ENCODE measurements at regions of chr1 and their contacts with region 1.

Region 1: DNA sequence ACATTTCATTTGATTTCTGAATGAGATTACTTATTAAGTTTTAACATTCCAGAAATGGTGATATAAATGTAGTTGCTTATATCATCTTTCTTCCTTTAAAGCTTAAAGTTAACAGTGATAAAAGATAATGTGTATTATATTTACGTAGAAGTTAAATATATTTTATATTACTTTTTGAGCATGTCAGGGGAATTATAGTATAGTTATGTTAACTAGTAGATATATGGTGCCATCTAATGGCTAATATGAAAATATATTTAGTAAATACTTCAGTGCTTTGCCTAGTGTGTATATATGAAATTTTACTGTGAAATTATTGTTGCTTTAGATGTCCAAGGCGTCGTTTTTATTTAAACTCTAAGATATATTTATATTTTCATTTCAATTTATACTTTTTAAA is 51.5 kb downstream of the SYT14 start:
- DNase-seq: no peak
- H3K4me3 ChIP-seq: no peak overlapping the region
- H3K4me3 Mint-ChIP-seq: no peak overlapping the region
- H3K27ac Mint-ChIP-seq: no peak overlapping the region
- H3K4me1 ChIP-seq: 0 out of 2 replicates have a peak, but pooled peaks cover 6% of the 10 kb centered on the region
- H3K4me1 Mint-ChIP-seq: no peaks in the 10 kb centered on the region
- H3K27me3 ChIP-seq: no peaks in the 10 kb centered on the region
- H3K27me3 Mint-ChIP-seq: no peaks in the 10 kb centered on the region
- CTCF ChIP-seq: peak in 1 of 2 experiments; percentile 38

Region 2: GRCh38 chr1:209850342-209850979 is 139.1 kb before region 1 on chr1:
- CTCF ChIA-PET with region 1: no interaction called
- POLR2A ChIA-PET with region 1: no interaction called
- intact Hi-C with region 1: loop called (anchors 1 kb)
- DNase-seq: peak; percentile 66 to 74
- H3K4me3 ChIP-seq: no peak overlapping the region
- H3K4me3 Mint-ChIP-seq: no peak overlapping the region
- H3K27ac Mint-ChIP-seq: no peak overlapping the region
- H3K4me1 ChIP-seq: no peaks in the 10 kb centered on the region
- H3K4me1 Mint-ChIP-seq: no peaks in the 10 kb centered on the region
- H3K27me3 ChIP-seq: no peaks in the 10 kb centered on the region
- H3K27me3 Mint-ChIP-seq: no peaks in the 10 kb centered on the region
- CTCF ChIP-seq: peak; percentile 74 to 79

Region 3: DNA sequence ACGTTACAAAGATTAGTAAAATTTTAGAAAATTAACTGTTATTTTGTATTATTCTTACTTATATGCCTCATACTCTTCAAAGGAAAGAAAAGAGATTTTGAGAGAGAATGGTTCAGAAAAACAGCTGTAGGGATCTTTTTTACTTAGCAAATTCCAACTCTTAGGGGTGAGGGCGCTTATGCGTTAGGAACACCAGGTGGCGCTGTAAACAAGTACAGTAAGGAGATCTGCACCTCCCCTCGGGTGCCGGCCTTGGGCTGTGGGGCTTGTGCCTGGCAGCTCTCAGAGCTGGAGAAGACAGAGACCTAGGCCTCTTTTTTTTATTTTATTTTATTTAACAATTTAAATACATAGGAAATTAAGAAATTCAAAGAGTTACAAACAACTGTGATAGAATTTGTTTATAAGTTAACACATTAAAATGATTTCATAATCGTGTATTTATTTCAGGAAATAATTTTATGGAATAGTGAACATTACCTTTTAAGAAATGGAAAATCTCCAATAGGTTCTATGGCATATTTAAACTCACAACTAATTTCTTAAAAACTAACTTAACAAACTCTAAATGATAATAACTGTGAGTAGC is 129.1 kb before region 1 on chr1:
- CTCF ChIA-PET with region 1: interaction called, 7 read pairs
- POLR2A ChIA-PET with region 1: no interaction called
- intact Hi-C with region 1: loop called (anchors 1 kb)
- DNase-seq: peak; percentile 77 to 80
- H3K4me3 ChIP-seq: no peak overlapping the region
- H3K4me3 Mint-ChIP-seq: no peak overlapping the region
- H3K27ac Mint-ChIP-seq: no peak overlapping the region
- H3K4me1 ChIP-seq: no peaks in the 10 kb centered on the region
- H3K4me1 Mint-ChIP-seq: no peaks in the 10 kb centered on the region
- H3K27me3 ChIP-seq: no peaks in the 10 kb centered on the region
- H3K27me3 Mint-ChIP-seq: no peaks in the 10 kb centered on the region
- CTCF ChIP-seq: peak; percentile 90 to 92

Region 4: DNA sequence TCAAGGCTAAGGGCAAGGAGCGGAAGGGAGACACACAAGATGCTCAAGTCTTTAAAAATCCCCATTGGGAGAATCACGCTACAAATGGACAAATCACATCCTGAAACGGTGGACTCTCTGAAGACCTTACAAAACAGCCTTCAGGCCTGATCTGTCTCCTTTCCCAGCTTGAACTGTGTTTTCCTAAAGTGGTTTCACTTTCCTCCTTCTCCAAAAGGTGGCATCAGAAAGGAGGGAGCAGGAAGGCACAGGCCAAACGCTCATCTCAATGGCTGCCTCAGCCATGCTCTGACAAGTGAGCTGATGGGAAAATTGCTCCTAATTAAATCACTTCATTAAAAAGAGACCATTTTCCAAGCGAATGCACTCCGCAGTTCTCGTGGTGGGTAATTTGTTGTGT is 114.0 kb before region 1 on chr1:
- CTCF ChIA-PET with region 1: no interaction called
- POLR2A ChIA-PET with region 1: no interaction called
- intact Hi-C with region 1: loop called (anchors 1 kb)
- DNase-seq: peak in 1 of 2 experiments; percentile 24
- H3K4me3 ChIP-seq: no peak overlapping the region
- H3K4me3 Mint-ChIP-seq: no peak overlapping the region
- H3K27ac Mint-ChIP-seq: no peak overlapping the region
- H3K4me1 ChIP-seq: no peaks in the 10 kb centered on the region; the same call in 1 of the 2 replicates
- H3K4me1 Mint-ChIP-seq: peaks cover 8% of the 10 kb centered on the region
- H3K27me3 ChIP-seq: no peaks in the 10 kb centered on the region
- H3K27me3 Mint-ChIP-seq: peaks cover 4% of the 10 kb centered on the region
- CTCF ChIP-seq: peak in 1 of 2 experiments; percentile 24

Region 5: GRCh38 chr1:210049616-210050015 is 60.1 kb after region 1 on chr1:
- CTCF ChIA-PET with region 1: no interaction called
- POLR2A ChIA-PET with region 1: no interaction called
- intact Hi-C with region 1: no loop called
- DNase-seq: no peak
- H3K4me3 ChIP-seq: no peak overlapping the region
- H3K4me3 Mint-ChIP-seq: no peak overlapping the region
- H3K27ac Mint-ChIP-seq: no peak overlapping the region
- H3K4me1 ChIP-seq: no peaks in the 10 kb centered on the region
- H3K4me1 Mint-ChIP-seq: no peaks in the 10 kb centered on the region
- H3K27me3 ChIP-seq: no peaks in the 10 kb centered on the region
- H3K27me3 Mint-ChIP-seq: no peaks in the 10 kb centered on the region
- CTCF ChIP-seq: no peak

Measured in Caco-2 (cell line).